ENCODE measurements at regions of chr2 and their contacts with region 1.

Region 1: DNA sequence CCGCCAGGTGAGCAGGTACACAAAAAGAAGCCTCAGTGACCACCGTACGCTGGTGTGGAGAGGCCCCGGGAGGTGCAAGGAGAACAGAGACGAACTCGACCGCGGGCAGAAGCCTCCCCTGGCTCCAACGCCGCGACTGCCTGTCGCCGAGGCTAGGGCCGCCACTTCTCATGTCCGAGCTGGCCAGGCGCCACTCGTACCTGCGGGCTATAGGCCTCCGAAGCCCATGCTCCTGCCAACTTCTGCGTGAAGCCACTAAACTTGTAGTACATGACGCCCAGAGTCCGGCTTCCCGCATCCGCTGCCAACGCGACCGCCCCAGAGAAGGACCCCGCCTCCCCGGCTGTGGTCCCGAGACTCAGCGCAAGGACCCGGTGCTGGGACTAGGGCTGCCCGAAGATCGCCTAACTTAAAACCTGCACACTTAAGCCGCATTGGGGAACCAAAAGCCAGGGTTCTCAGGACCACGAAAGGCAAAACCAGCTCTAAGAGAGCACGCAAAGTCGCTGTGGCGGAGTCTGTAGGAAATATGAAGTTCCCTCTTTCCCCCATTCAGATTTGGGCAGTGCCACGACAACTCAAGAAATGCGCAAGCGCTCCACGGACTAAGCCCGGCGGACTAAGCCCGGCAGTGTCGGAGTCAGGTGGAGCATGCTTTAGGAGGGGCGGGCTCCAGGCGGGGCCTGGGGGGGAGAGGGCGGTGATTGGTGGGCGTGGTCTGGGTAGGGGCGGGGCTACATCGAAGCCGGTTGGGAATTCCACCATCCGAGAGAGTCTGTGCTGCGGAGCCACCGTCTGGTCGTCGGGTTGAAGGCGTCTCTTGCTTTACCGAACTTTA is at the start of gene COX7A2L:
- DNase-seq: peak; percentile 98
- H3K4me3 Mint-ChIP-seq: peak within 1 kb of the TSS; percentile 90
- H3K27ac Mint-ChIP-seq: peak within 1 kb of the TSS; percentile 99
- H3K4me1 Mint-ChIP-seq: peaks cover 44% of the 10 kb centered on the region
- H3K27me3 Mint-ChIP-seq: no peaks in the 10 kb centered on the region
- total RNA-seq, gene COX7A2L: 85.3 and 88.4 TPM in 2 replicates

Region 2: GRCh38 chr2:42102024-42102590 is 259.0 kb before region 1 on chr2:
- intact Hi-C with region 1: loop called (anchors 1 kb)
- DNase-seq: peak; percentile 98
- H3K4me3 Mint-ChIP-seq: peak overlapping the region; percentile 74
- H3K27ac Mint-ChIP-seq: peak overlapping the region; percentile 93
- H3K4me1 Mint-ChIP-seq: peaks cover 57% of the 10 kb centered on the region
- H3K27me3 Mint-ChIP-seq: no peaks in the 10 kb centered on the region

Region 3: DNA sequence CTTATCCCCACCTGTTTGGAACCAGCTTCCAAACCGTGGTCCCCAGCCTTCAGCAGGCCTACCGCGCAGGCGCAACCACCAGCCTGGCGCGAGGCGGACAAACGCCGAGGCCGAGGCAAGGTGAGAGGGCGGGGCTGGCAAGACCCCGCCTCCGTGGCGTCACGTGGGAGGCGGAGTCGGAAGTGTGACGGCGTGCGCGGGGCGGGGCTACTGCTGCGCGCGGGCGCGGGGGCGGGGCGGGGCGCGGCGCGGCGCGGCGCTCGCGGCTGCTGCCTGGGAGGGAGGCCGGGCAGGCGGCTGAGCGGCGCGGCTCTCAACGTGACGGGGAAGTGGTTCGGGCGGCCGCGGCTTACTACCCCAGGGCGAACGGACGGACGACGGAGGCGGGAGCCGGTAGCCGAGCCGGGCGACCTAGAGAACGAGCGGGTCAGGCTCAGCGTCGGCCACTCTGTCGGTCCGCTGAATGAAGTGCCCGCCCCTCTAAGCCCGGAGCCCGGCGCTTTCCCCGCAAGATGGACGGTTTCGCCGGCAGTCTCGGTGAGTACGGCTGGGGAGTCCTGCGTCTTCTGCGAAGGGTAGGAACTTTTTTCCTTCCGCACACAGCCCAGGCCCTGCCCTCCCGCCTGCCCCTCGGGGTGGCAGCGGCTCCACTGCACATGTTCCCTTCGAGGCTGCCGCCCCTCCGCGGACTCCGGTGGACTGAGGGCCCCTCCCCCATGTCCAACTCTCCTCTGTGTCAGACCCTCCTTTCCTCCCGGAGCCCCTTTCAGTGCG is 191.8 kb before region 1 on chr2 and contains the start of gene EML4:
- intact Hi-C with region 1: loop called (anchors 1 kb)
- DNase-seq: peak; percentile 98
- H3K4me3 Mint-ChIP-seq: no peak within 1 kb of the TSS
- H3K27ac Mint-ChIP-seq: peak within 1 kb of the TSS; percentile 23
- H3K4me1 Mint-ChIP-seq: peaks cover 18% of the 10 kb centered on the region
- H3K27me3 Mint-ChIP-seq: peaks cover 5% of the 10 kb centered on the region
- total RNA-seq, gene EML4: 51.3 and 54.9 TPM in 2 replicates

Region 4: DNA sequence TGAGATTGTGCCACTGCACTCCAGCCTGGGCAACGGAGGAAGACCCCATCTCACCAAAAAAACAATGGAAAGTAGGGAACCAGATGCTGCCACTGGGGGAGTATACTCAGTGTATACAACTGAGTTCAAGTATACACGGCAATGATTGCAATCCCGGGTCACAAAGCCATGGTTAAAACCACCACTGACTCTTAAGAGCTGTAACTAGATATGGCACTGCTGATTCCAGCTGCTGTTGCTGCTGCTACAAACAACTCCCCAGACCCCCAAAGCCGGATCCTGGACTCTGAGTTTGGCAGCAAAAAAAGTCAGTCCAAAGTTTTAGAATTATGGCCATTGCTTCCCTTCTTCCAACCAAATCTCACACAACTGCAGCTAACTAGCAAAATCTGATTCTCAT is 43.6 kb after region 1 on chr2:
- intact Hi-C with region 1: no loop called
- DNase-seq: no peak
- H3K4me3 Mint-ChIP-seq: no peak overlapping the region
- H3K27ac Mint-ChIP-seq: no peak overlapping the region
- H3K4me1 Mint-ChIP-seq: no peaks in the 10 kb centered on the region
- H3K27me3 Mint-ChIP-seq: peaks cover 5% of the 10 kb centered on the region

Region 5: DNA sequence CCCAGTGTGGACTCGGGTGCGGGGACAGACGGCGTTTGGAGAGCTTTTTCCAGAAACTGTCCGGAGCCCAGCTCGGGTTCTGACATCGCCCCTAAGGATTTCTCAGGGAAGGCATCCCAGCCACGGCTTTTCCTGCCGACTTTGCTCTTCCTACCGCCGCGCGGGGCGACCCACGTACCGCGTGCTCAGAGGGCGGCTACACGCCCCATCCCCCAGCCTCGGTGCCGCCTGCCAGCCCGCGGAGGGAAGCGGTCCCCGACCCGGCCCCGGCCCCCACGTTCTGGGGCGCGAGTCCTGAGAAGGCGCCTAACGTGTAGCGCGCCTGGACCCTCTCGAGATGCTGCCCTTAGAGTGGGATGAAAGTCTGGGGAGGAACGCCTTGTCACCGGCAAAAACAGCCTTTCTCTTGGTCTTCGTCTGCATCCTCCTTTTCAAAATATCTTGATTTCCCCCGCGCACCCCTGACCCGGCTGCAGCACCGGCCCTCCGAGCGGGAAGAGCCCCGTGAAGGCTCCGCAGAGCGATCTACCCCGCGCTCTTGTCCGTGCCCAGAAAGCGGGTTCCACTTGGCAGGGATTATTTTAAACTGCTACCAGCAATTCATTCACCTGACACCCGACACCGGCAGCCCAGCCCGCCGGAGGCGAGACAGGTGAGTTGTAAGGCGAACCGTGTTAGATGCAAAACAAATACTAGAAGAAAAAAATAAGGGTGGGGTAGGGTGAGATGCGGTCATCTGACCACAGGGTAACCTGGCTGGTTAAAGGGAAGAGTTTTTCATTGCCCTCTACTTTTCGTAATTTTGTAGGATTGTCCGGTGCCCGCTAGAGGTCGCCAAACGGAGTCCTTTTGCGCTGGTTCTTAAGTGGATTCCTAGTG is 133.5 kb after region 1 on chr2:
- intact Hi-C with region 1: loop called (anchors 1 kb)
- DNase-seq: peak; percentile 92
- H3K4me3 Mint-ChIP-seq: peak overlapping the region; percentile 86
- H3K27ac Mint-ChIP-seq: peak overlapping the region; percentile 76
- H3K4me1 Mint-ChIP-seq: peaks cover 10% of the 10 kb centered on the region
- H3K27me3 Mint-ChIP-seq: peaks cover 37% of the 10 kb centered on the region

Region 6: GRCh38 chr2:42663106-42663780 is 302.1 kb after region 1 on chr2:
- intact Hi-C with region 1: loop called (anchors 10 kb)
- DNase-seq: peak; percentile 89
- H3K4me3 Mint-ChIP-seq: no peak overlapping the region
- H3K27ac Mint-ChIP-seq: no peak overlapping the region
- H3K4me1 Mint-ChIP-seq: peaks cover 7% of the 10 kb centered on the region
- H3K27me3 Mint-ChIP-seq: no peaks in the 10 kb centered on the region